ENCODE measurements at regions of chr3 and their contacts with region 1.

Region 1: DNA sequence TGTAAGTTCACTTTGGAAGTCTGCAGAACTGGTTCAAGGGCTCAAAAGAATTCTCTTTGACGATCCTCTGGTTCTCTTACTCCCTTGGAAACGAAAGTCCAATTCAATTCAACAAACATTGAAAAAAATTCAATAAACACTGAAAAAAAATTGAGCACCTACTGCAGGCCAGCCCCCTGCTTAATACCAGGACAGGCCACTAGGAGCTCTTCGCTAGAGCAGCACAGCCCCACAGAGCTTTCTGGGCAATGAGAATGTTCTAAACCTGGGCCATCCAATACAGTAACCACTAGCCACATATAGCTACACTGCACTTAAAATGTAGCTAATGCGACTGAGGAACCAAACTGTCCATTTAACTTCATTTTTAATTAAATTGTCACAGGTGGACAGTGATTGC is 50.4 kb upstream of the DCLK3 start:
- DNase-seq: no peak
- H3K4me3 ChIP-seq: no peak overlapping the region
- H3K27ac ChIP-seq: no peak overlapping the region
- H3K4me1 ChIP-seq: no peaks in the 10 kb centered on the region; a peak in 2 of 7 replicates
- H3K27me3 ChIP-seq: no peaks in the 10 kb centered on the region
- CTCF ChIP-seq: peak; percentile 29 to 45 (median 32); a peak in 3 of 4 replicates
- EP300 ChIP-seq: no peak
- POLR2A ChIP-seq: no peak
- RAD21 ChIP-seq: peak in 1 of 2 experiments; percentile 20; a peak in 1 of 4 replicates

Region 2: GRCh38 chr3:36477655-36478054 is 337.1 kb before region 1 on chr3:
- CTCF ChIA-PET with region 1: no interaction called
- POLR2A ChIA-PET with region 1: no interaction called
- DNase-seq: no peak
- H3K4me3 ChIP-seq: no peak overlapping the region
- H3K27ac ChIP-seq: no peak overlapping the region
- H3K4me1 ChIP-seq: no peaks in the 10 kb centered on the region
- H3K27me3 ChIP-seq: no peaks in the 10 kb centered on the region
- CTCF ChIP-seq: no peak
- EP300 ChIP-seq: no peak
- POLR2A ChIP-seq: no peak
- RAD21 ChIP-seq: no peak

Region 3: GRCh38 chr3:36741285-36741684 is 73.5 kb before region 1 on chr3:
- CTCF ChIA-PET with region 1: interaction called, 21 read pairs
- POLR2A ChIA-PET with region 1: no interaction called
- DNase-seq: no peak
- H3K4me3 ChIP-seq: no peak overlapping the region
- H3K27ac ChIP-seq: no peak overlapping the region
- H3K4me1 ChIP-seq: no peaks in the 10 kb centered on the region
- H3K27me3 ChIP-seq: no peaks in the 10 kb centered on the region
- CTCF ChIP-seq: peak; percentile 27 to 65 (median 51)
- EP300 ChIP-seq: no peak
- POLR2A ChIP-seq: no peak
- RAD21 ChIP-seq: peak; percentile 45 to 58

Region 4: GRCh38 chr3:36756269-36756668 is 58.5 kb before region 1 on chr3:
- CTCF ChIA-PET with region 1: interaction called, 11 read pairs
- POLR2A ChIA-PET with region 1: no interaction called
- DNase-seq: no peak
- H3K4me3 ChIP-seq: no peak overlapping the region
- H3K27ac ChIP-seq: no peak overlapping the region
- H3K4me1 ChIP-seq: no peaks in the 10 kb centered on the region
- H3K27me3 ChIP-seq: no peaks in the 10 kb centered on the region
- CTCF ChIP-seq: no peak
- EP300 ChIP-seq: no peak
- POLR2A ChIP-seq: no peak
- RAD21 ChIP-seq: no peak

Region 5: GRCh38 chr3:36804295-36805055 is 10.3 kb before region 1 on chr3:
- CTCF ChIA-PET with region 1: interaction called, 60 read pairs
- POLR2A ChIA-PET with region 1: no interaction called
- DNase-seq: no peak
- H3K4me3 ChIP-seq: no peak overlapping the region
- H3K27ac ChIP-seq: no peak overlapping the region
- H3K4me1 ChIP-seq: peaks cover 0 to 5% (median 2%) of the 10 kb centered on the region in 4 experiments; a peak in 3 of 7 replicates
- H3K27me3 ChIP-seq: no peaks in the 10 kb centered on the region
- CTCF ChIP-seq: no peak
- EP300 ChIP-seq: no peak
- POLR2A ChIP-seq: no peak
- RAD21 ChIP-seq: no peak

Region 6: GRCh38 chr3:36837089-36837488 is 22.3 kb after region 1 on chr3:
- CTCF ChIA-PET with region 1: interaction called, 33 read pairs
- POLR2A ChIA-PET with region 1: no interaction called
- DNase-seq: no peak
- H3K4me3 ChIP-seq: no peak overlapping the region
- H3K27ac ChIP-seq: no peak overlapping the region
- H3K4me1 ChIP-seq: no peaks in the 10 kb centered on the region
- H3K27me3 ChIP-seq: no peaks in the 10 kb centered on the region
- CTCF ChIP-seq: peak in 2 of 3 experiments; percentile 73 to 81; a peak in 3 of 4 replicates
- EP300 ChIP-seq: no peak
- POLR2A ChIP-seq: no peak
- RAD21 ChIP-seq: peak; percentile 73 to 78

Region 7: GRCh38 chr3:36843065-36844051 is 28.6 kb after region 1 on chr3:
- CTCF ChIA-PET with region 1: interaction called, 33 read pairs
- POLR2A ChIA-PET with region 1: no interaction called
- DNase-seq: peak; percentile 69 to 79
- H3K4me3 ChIP-seq: no peak overlapping the region
- H3K27ac ChIP-seq: no peak overlapping the region
- H3K4me1 ChIP-seq: no peaks in the 10 kb centered on the region
- H3K27me3 ChIP-seq: no peaks in the 10 kb centered on the region
- CTCF ChIP-seq: peak; percentile 80 to 99 (median 90)
- EP300 ChIP-seq: no peak
- POLR2A ChIP-seq: no peak
- RAD21 ChIP-seq: peak; percentile 63 to 68

Measured in H1 (cell line).